Ovary (tissue), 10 donors: ENCODE measurements at regions of chr1 and their contacts with region 1.

Region 1: GRCh38 chr1:177948336-177948972 is 21.4 kb downstream of the SEC16B start:
- DNase-seq: peak; percentile 49 to 68 (median 65)
- H3K4me3 ChIP-seq: no peak overlapping the region
- H3K27ac ChIP-seq: no peak overlapping the region
- H3K4me1 ChIP-seq: peaks cover 3% of the 10 kb centered on the region
- H3K27me3 ChIP-seq: no peaks in the 10 kb centered on the region
- CTCF ChIP-seq: peak; percentile 70 to 76 (median 71)
- EP300 ChIP-seq: no peak
- POLR2A ChIP-seq: no peak

Region 2: GRCh38 chr1:176897350-176898236 is 1050.9 kb before region 1 on chr1:
- intact Hi-C with region 1: loop called in 1 of 4 experiments (anchors 5 kb)
- DNase-seq: peak; percentile 47 to 71 (median 63)
- H3K4me3 ChIP-seq: peak overlapping the region; percentile 0
- H3K27ac ChIP-seq: no peak overlapping the region
- H3K4me1 ChIP-seq: peaks cover 2% of the 10 kb centered on the region
- H3K27me3 ChIP-seq: no peaks in the 10 kb centered on the region
- CTCF ChIP-seq: peak; percentile 24 to 55 (median 52)
- EP300 ChIP-seq: no peak
- POLR2A ChIP-seq: no peak